Calu3 (cell line): ENCODE measurements at regions of chr21 and their contacts with region 1.

Region 1: DNA sequence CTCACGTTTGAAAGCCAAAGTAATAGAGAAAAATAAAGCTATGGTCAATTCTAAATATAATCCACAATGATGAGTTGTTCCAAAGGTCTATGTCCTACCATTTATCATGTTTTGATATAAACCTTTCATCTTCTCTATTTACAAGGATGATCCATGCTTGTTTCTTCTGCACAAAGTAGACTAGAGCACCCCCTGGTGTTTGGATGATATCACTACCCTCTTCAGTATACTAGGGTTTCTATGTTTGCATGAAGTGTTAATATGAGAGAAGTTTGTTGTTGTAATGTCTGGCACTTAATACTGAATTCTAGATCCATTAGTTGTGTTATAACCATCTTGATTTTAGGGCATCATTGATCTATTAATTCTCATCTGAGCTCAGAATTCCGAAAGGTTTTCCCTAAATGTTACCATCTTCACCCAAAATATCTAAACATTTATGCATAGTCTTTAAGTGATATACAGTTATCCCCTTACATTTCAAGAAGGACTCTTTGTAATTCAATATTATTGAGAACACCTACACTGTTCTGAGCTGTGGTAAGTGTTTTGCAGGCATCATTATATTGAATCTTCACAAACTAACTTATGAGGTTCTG is 21.1 kb downstream of the CLDN8 start:
- DNase-seq: peak; percentile 38
- H3K4me3 Mint-ChIP-seq: no peak overlapping the region
- H3K27ac Mint-ChIP-seq: no peak overlapping the region
- H3K4me1 Mint-ChIP-seq: no peaks in the 10 kb centered on the region
- H3K27me3 Mint-ChIP-seq: no peaks in the 10 kb centered on the region
- CTCF ChIP-seq: peak; percentile 33

Region 2: GRCh38 chr21:29849735-29850176 is 345.0 kb before region 1 on chr21:
- CTCF ChIA-PET with region 1: no interaction called
- intact Hi-C with region 1: no loop called
- DNase-seq: peak; percentile 48
- H3K4me3 Mint-ChIP-seq: no peak overlapping the region
- H3K27ac Mint-ChIP-seq: no peak overlapping the region
- H3K4me1 Mint-ChIP-seq: no peaks in the 10 kb centered on the region
- H3K27me3 Mint-ChIP-seq: no peaks in the 10 kb centered on the region
- CTCF ChIP-seq: peak; percentile 60

Region 3: GRCh38 chr21:29939924-29940275 is 254.9 kb before region 1 on chr21 and contains the start of gene GRIK1:
- CTCF ChIA-PET with region 1: no interaction called
- intact Hi-C with region 1: loop called (anchors 5 kb)
- DNase-seq: no peak
- H3K4me3 Mint-ChIP-seq: peak within 1 kb of the TSS; percentile 37
- H3K27ac Mint-ChIP-seq: no peak within 1 kb of the TSS
- H3K4me1 Mint-ChIP-seq: no peaks in the 10 kb centered on the region
- H3K27me3 Mint-ChIP-seq: peaks cover 26% of the 10 kb centered on the region
- CTCF ChIP-seq: no peak
- total RNA-seq, gene GRIK1: not detected in 2 replicates

Region 4: GRCh38 chr21:30044445-30045064 is 150.2 kb before region 1 on chr21:
- CTCF ChIA-PET with region 1: no interaction called
- intact Hi-C with region 1: loop called (anchors 1 kb)
- DNase-seq: peak; percentile 2
- H3K4me3 Mint-ChIP-seq: no peak overlapping the region
- H3K27ac Mint-ChIP-seq: no peak overlapping the region
- H3K4me1 Mint-ChIP-seq: no peaks in the 10 kb centered on the region
- H3K27me3 Mint-ChIP-seq: peaks cover 7% of the 10 kb centered on the region
- CTCF ChIP-seq: peak; percentile 46

Region 5: DNA sequence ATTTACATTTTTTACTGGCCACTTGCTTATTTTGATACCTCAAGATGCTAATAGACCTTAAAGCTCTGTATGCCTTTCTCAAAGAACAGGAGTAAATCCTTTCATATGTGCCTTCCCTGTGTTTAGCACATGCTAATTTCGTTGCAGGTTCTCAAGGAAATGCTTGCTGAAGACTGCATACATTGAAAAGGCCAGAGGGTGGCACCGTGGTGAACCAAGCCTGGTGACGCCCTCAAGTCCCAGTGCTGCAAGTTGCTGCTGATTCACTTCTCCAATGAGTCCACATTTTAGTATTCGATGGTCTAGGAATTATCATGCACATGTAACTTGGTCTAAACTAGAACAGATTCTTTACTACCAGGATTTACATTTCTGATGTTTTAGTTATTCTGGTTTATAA is 122.3 kb before region 1 on chr21:
- CTCF ChIA-PET with region 1: no interaction called
- intact Hi-C with region 1: loop called (anchors 1 kb)
- DNase-seq: peak; percentile 46
- H3K4me3 Mint-ChIP-seq: no peak overlapping the region
- H3K27ac Mint-ChIP-seq: no peak overlapping the region
- H3K4me1 Mint-ChIP-seq: peaks cover 8% of the 10 kb centered on the region
- H3K27me3 Mint-ChIP-seq: peaks cover 13% of the 10 kb centered on the region
- CTCF ChIP-seq: no peak